ENCODE measurements at regions of chr3 and their contacts with region 1.

Region 1: DNA sequence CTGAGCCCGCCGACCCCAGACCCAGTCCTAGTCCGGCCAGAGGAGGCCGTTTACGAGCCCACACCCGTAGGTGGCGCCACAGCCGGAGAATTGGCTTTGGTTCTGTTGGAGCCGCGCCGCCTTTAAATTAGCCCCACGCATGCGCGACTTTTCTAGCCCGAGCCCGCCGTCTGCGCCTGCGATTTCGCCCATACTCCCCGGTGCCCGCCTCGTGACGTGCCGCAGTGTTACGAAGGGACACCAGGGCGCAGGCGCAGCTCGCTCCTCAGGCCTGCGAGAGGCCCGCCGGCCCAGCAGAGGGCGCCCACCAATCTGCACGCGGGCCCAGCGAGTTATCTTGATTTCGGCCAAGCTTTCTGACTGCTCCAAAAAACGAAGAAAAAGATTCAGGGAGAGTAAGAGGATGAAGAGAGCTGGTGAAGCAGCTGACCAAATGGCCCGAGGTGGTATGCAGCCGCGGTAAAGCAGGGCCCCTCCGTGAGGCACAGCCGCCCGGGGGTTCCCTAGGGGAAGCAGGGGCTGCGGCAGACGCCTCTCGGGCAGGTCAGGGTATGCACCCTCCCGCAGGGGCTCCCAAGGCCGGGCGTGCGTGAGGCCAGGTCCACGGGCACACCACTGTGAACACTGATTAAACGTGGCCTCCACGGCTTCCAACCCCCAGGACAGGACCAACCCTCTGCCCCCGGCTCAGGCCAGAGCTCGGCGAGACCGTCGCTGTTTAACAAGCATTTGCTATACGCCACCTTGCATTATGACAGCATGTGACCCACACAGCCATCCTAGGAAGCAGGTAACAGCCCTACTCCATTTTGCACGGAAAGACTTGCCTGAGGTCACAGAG is 32.8 kb downstream of the RPN1 start:
- DNase-seq: peak; percentile 96
- H3K4me3 ChIP-seq: peak overlapping the region; percentile 74 to 78
- H3K27ac ChIP-seq: peak overlapping the region; percentile 85 to 89
- H3K4me1 ChIP-seq: peaks cover 9% of the 10 kb centered on the region
- H3K27me3 ChIP-seq: no peaks in the 10 kb centered on the region
- CTCF ChIP-seq: peak; percentile 79 to 99 (median 98)
- POLR2A ChIP-seq: peak; percentile 64

Region 2: DNA sequence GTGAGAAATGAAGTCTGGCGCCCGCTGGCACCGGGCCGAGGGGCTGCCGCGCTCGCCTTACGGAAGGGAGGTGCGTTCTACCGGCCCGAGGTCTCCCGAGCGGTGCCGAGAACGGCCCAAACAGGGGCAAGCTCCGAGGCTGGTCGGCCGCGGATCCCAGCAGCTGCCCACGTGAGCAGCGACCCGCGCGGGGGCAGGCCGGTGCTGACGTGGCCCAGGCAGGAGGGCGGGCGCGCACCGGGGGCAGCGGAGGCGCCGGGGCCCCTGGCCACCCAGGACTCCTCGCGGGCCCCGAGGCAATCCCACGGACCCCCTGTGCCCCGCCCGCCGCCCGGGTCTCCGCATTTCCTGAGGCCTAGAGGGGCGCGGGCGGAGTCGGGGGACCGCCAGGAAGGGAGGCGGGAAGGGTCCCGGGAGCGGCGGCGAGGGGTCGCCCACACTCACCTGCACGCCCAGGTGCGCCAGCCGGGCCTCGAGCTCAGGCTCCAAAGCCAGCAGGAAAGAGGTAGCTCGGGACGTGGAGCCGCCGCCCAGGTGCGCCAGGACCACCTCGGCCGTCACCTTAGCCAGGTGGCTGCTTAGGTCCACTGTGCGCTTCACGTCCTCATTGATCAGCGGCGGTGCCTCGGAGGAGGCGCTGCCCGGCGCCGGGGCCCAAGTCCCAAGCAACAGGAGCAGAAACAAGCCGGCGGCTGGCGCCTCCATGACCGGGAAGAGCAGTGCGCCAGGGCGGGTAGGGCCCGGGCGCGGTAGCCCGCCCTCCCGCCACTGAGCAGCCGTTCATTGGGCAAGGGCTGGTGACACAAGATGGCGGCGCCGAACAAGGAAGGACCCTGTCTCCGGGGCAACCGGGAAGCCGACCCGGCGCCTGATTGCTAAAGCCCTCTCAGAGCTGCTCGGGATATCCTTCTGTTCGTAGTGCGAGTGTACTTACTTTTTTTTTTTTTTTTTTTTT is 32.6 kb after region 1 on chr3 and contains the start of gene RPN1:
- intact Hi-C with region 1: loop called (anchors 5 kb)
- DNase-seq: peak; percentile 96
- H3K4me3 ChIP-seq: peak within 1 kb of the TSS; percentile 78 to 96
- H3K27ac ChIP-seq: peak within 1 kb of the TSS; percentile 92 to 96
- H3K4me1 ChIP-seq: peaks cover 4% of the 10 kb centered on the region
- H3K27me3 ChIP-seq: no peaks in the 10 kb centered on the region
- CTCF ChIP-seq: peak in 1 of 4 experiments; percentile 9
- POLR2A ChIP-seq: peak; percentile 84
- total RNA-seq, gene RPN1: 291 to 359 TPM

Region 3: GRCh38 chr3:128794770-128795649 is 177.2 kb after region 1 on chr3:
- intact Hi-C with region 1: loop called (anchors 5 kb)
- DNase-seq: peak; percentile 63
- H3K4me3 ChIP-seq: no peak overlapping the region
- H3K27ac ChIP-seq: peak overlapping the region in 1 of 2 donors; percentile 1
- H3K4me1 ChIP-seq: no peaks in the 10 kb centered on the region
- H3K27me3 ChIP-seq: no peaks in the 10 kb centered on the region
- CTCF ChIP-seq: peak; percentile 53 to 87 (median 84)
- POLR2A ChIP-seq: no peak

Region 4: GRCh38 chr3:128845778-128846485 is 228.2 kb after region 1 on chr3:
- intact Hi-C with region 1: loop called (anchors 5 kb)
- DNase-seq: peak; percentile 39
- H3K4me3 ChIP-seq: peak overlapping the region; percentile 22 to 33
- H3K27ac ChIP-seq: peak overlapping the region in 1 of 2 donors; percentile 21
- H3K4me1 ChIP-seq: no peaks in the 10 kb centered on the region
- H3K27me3 ChIP-seq: no peaks in the 10 kb centered on the region
- CTCF ChIP-seq: peak in 3 of 4 experiments; percentile 32 to 60 (median 51)
- POLR2A ChIP-seq: no peak